ENCODE measurements at regions of chr15 and their contacts with region 1.

Region 1: DNA sequence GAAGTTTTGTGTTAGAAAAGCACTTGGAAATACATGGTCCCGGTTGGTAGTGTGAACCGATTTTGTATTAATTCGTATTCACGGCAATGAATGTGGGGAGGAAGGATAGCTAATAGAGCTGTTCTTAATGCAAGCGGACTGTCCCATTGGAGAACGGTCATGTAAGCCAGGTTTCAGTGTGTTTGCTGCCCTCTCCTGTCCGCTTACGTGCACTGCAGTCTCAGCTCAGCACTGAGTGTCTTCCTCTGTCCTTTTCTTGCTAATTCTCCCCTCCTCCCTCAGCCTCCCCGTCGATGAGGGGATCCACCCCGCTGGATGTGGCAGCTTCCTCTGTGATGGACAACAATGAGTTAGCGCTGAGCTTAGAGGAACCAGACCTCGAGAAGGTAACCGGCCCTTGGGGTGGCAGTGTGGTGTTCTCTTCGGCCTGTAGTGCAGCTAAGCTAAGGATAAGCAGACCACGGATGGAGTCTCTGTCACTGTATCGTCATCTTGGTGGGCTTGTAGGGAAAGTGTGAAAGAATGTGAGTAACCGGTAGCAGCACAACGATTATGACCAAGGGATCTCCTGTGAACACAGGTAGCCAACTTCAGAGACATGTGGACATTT is 267.5 kb upstream of the CHRM5 start:
- DNase-seq: peak; percentile 40 to 75
- ATAC-seq: peak; percentile 76 to 92 (median 82)
- H3K4me3 ChIP-seq: no peak overlapping the region
- H3K4me3 Mint-ChIP-seq: no peak overlapping the region
- H3K27ac ChIP-seq: no peak overlapping the region
- H3K27ac Mint-ChIP-seq: no peak overlapping the region
- H3K4me1 ChIP-seq: no peaks in the 10 kb centered on the region
- H3K4me1 Mint-ChIP-seq: peaks cover 0 to 5% of the 10 kb centered on the region in 2 donors
- H3K27me3 ChIP-seq: no peaks in the 10 kb centered on the region
- H3K27me3 Mint-ChIP-seq: peaks cover 3 to 21% of the 10 kb centered on the region in 2 donors
- CTCF ChIP-seq: peak; percentile 84

Region 2: GRCh38 chr15:33226559-33227181 is 474.1 kb before region 1 on chr15:
- intact Hi-C with region 1: loop called (anchors 2 kb)
- DNase-seq: peak; percentile 40 to 85
- ATAC-seq: peak; percentile 94 to 99 (median 96)
- H3K4me3 ChIP-seq: no peak overlapping the region
- H3K4me3 Mint-ChIP-seq: no peak overlapping the region
- H3K27ac ChIP-seq: no peak overlapping the region
- H3K27ac Mint-ChIP-seq: peak overlapping the region in 1 of 2 donors; percentile 42
- H3K4me1 ChIP-seq: peaks cover 9% of the 10 kb centered on the region
- H3K4me1 Mint-ChIP-seq: peaks cover 0 to 22% of the 10 kb centered on the region in 2 donors
- H3K27me3 ChIP-seq: no peaks in the 10 kb centered on the region
- H3K27me3 Mint-ChIP-seq: no peaks in the 10 kb centered on the region
- CTCF ChIP-seq: peak; percentile 75

Region 3: GRCh38 chr15:33292717-33293307 is 408.0 kb before region 1 on chr15:
- intact Hi-C with region 1: loop called (anchors 1 kb)
- DNase-seq: peak in 1 of 2 donors; percentile 48
- ATAC-seq: no peak
- H3K4me3 ChIP-seq: no peak overlapping the region
- H3K4me3 Mint-ChIP-seq: no peak overlapping the region
- H3K27ac ChIP-seq: no peak overlapping the region
- H3K27ac Mint-ChIP-seq: no peak overlapping the region
- H3K4me1 ChIP-seq: no peaks in the 10 kb centered on the region
- H3K4me1 Mint-ChIP-seq: no peaks in the 10 kb centered on the region
- H3K27me3 ChIP-seq: no peaks in the 10 kb centered on the region
- H3K27me3 Mint-ChIP-seq: peaks cover under 1 to 5% of the 10 kb centered on the region in 2 donors
- CTCF ChIP-seq: peak; percentile 50

Region 4: GRCh38 chr15:33675246-33675645 is 25.6 kb before region 1 on chr15:
- intact Hi-C with region 1: no loop called
- DNase-seq: no peak
- ATAC-seq: no peak
- H3K4me3 ChIP-seq: no peak overlapping the region
- H3K4me3 Mint-ChIP-seq: no peak overlapping the region
- H3K27ac ChIP-seq: no peak overlapping the region
- H3K27ac Mint-ChIP-seq: no peak overlapping the region
- H3K4me1 ChIP-seq: no peaks in the 10 kb centered on the region
- H3K4me1 Mint-ChIP-seq: no peaks in the 10 kb centered on the region
- H3K27me3 ChIP-seq: no peaks in the 10 kb centered on the region
- H3K27me3 Mint-ChIP-seq: peaks cover 13 to 31% of the 10 kb centered on the region in 2 donors
- CTCF ChIP-seq: no peak

Measured in natural killer cell (primary cell).